Heart right ventricle (tissue), 16 donors: ENCODE measurements at regions of chr12 and their contacts with region 1.

Region 1: GRCh38 chr12:110680032-110680431 is 8.9 kb downstream of the HVCN1 start:
- DNase-seq: no peak
- ATAC-seq: peak in 1 of 8 donors; percentile 23
- H3K4me3 ChIP-seq: no peak overlapping the region
- H3K27ac ChIP-seq: no peak overlapping the region
- H3K4me1 ChIP-seq: peaks cover 0 to 41% (median 23%) of the 10 kb centered on the region in 9 donors
- H3K27me3 ChIP-seq: no peaks in the 10 kb centered on the region
- CTCF ChIP-seq: no peak

Region 2: DNA sequence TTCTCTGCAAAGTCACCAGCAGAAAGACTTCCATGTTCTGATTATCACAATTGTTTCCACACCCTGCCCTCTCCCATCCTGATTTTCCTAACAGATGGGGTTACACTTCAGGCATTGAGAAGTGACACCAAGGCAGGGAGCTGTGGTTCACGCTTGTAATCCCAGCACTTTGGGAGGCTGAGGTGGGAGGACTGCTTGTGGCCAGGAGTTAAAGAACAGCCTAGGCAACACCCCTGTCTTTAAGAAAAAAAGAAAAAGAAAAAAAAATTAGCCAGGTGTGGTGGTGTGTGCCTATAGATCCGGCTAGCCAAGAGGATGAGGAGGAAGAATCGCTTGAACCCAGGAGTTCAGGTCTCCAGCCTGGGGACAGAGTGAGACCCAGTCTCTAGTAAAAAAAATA is 57.5 kb after region 1 on chr12:
- intact Hi-C with region 1: loop called in 1 of 10 experiments (anchors 2 kb)
- DNase-seq: no peak
- ATAC-seq: no peak
- H3K4me3 ChIP-seq: no peak overlapping the region
- H3K27ac ChIP-seq: no peak overlapping the region
- H3K4me1 ChIP-seq: peaks cover 21 to 83% (median 70%) of the 10 kb centered on the region in 9 donors
- H3K27me3 ChIP-seq: no peaks in the 10 kb centered on the region
- CTCF ChIP-seq: no peak

Region 3: DNA sequence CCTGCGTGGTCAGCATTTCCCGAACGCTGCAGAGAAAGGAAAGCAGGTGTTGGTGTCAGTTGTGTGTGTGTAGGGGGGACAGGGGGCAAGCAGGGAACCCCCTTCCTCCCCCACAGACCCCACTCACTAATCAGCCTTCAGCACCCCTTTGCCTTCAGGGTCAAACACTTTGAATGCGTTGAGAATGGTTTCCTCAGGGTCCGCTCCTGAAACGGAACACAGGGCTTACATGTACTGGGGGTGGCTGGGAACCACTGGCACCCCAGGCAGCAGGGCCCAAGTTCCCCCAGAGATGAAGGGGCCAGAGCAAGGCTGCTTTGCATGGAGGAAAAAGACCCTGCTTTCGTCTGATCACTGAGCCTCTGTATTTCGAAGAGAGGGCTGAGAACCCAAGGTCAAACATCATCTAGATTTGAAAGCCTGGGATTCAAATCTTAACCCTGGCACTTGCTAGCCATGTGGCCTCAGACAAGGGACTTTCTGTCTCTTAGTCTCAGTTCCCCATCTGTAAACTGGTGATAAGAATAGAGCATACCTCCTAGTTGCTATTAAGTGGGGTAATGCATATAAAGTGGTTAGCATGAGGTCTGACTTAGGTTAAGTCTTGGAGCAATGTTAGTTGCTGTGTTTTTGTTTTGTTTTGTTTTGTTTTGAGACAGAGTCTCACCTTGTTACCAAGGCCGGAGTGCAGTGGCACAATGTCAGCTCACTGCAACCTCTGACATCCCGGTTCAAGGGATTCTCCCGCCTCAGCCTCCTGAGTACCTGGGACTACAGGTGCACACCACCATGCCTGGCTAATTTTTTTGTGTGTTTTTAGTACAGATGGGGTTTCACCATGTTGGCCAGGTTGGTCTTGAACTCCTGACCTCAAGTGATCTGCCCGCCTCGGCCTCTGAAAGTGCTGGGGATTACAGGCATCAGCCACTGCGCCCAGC is 233.4 kb after region 1 on chr12:
- intact Hi-C with region 1: no loop called
- DNase-seq: no peak
- ATAC-seq: no peak
- H3K4me3 ChIP-seq: no peak overlapping the region
- H3K27ac ChIP-seq: peak overlapping the region in 3 of 10 donors; percentile 50 to 96 (median 53)
- H3K4me1 ChIP-seq: peaks cover 0 to 5% (median 0%) of the 10 kb centered on the region in 9 donors
- H3K27me3 ChIP-seq: no peaks in the 10 kb centered on the region
- CTCF ChIP-seq: no peak